Astrocyte of the cerebellum (primary cell): ENCODE measurements at regions of chr6 and their contacts with region 1.

Region 1: GRCh38 chr6:129672881-129673643 is 36.9 kb downstream of the ARHGAP18 start:
- DNase-seq: peak; percentile 56
- H3K4me3 ChIP-seq: no peak overlapping the region
- CTCF ChIP-seq: no peak

Region 2: GRCh38 chr6:129603741-129604140 is 69.3 kb before region 1 on chr6:
- in situ Hi-C with region 1: loop called (anchors 5 kb)
- DNase-seq: no peak
- H3K4me3 ChIP-seq: no peak overlapping the region
- CTCF ChIP-seq: no peak

Region 3: GRCh38 chr6:129621247-129621646 is 51.8 kb before region 1 on chr6:
- in situ Hi-C with region 1: no loop called
- DNase-seq: no peak
- H3K4me3 ChIP-seq: no peak overlapping the region
- CTCF ChIP-seq: peak; percentile 20

Region 4: GRCh38 chr6:129828229-129828628 is 155.2 kb after region 1 on chr6:
- in situ Hi-C with region 1: no loop called
- DNase-seq: no peak
- H3K4me3 ChIP-seq: no peak overlapping the region
- CTCF ChIP-seq: no peak